Sigmoid colon (tissue), 7 donors: ENCODE measurements at regions of chr12 and their contacts with region 1.

Region 1: DNA sequence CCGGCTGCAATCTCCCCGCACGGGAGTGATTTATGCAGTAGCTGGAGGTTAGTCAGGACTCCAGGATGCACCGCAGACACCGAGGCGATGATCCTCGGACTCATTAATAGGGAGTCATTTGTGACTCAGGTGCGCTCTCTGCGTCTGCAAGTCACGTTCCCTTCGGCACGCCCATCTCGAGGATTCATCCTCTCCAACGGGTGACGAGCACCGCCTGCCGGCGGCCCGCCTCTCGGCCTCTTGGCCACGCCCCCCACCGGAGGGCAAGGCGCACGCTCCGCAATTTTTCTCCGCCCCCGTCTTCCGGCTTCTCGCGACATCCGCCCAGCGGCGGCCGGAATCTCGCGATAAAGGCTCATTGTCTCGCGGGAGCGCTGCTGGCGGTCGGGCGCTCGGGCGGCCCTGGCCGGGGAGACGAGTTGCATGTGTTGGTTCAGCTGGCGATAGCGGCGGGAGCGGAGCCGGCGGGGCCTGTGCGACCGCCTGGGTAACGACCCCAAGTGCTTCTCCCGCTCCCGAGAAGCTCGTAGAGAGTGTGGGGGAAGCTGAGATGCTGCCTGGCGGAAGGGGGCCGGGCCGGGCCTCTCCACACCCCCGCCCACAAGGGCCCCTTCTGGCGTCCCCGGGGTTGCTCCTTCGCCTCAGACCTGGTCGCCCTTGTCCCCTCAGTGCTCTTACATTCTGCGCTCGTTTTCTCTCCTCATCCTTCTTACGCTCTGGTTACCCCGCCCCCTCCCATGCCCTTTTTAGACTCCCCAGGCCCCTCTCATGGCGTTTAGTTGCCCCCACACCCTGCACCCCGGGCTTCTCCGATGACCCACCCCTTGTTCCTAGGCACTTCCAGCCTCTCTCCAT is at the start of gene DENR:
- DNase-seq: peak; percentile 99
- H3K4me3 ChIP-seq: peak within 1 kb of the TSS; percentile 79 to 94 (median 86)
- H3K27ac ChIP-seq: peak within 1 kb of the TSS; percentile 79 to 89 (median 83)
- H3K4me1 ChIP-seq: peaks cover 0 to 20% (median 16%) of the 10 kb centered on the region in 4 donors
- H3K27me3 ChIP-seq: no peaks in the 10 kb centered on the region
- CTCF ChIP-seq: peak in 3 of 4 experiments; percentile 35 to 47 (median 46)
- EP300 ChIP-seq: peak in 1 of 4 donors; percentile 78
- POLR2A ChIP-seq: peak; percentile 37 to 82
- total RNA-seq, gene DENR: 28.8 to 44.9 (median 31.0) TPM

Region 2: GRCh38 chr12:122526683-122527477 is 225.8 kb before region 1 on chr12 and contains the starts of genes KNTC1 and RSRC2:
- intact Hi-C with region 1: loop called (anchors 1 kb)
- DNase-seq: peak; percentile 99
- H3K4me3 ChIP-seq: peak within 1 kb of the TSS; percentile 57 to 79 (median 66)
- H3K27ac ChIP-seq: peak within 1 kb of the TSS; percentile 87 to 95 (median 94)
- H3K4me1 ChIP-seq: peaks cover 0 to 49% (median 45%) of the 10 kb centered on the region in 4 donors
- H3K27me3 ChIP-seq: no peaks in the 10 kb centered on the region
- CTCF ChIP-seq: no peak
- EP300 ChIP-seq: peak in 2 of 4 donors; percentile 10 to 34
- POLR2A ChIP-seq: peak; percentile 96 to 97
- total RNA-seq, gene KNTC1: 5.8 to 13.8 (median 9.1) TPM
- total RNA-seq, gene RSRC2: 60.9 to 79.9 (median 68.8) TPM

Region 3: GRCh38 chr12:122642009-122642408 is 110.7 kb before region 1 on chr12:
- intact Hi-C with region 1: loop called (anchors 2 kb)
- DNase-seq: no peak
- H3K4me3 ChIP-seq: no peak overlapping the region
- H3K27ac ChIP-seq: no peak overlapping the region
- H3K4me1 ChIP-seq: no peaks in the 10 kb centered on the region
- H3K27me3 ChIP-seq: no peaks in the 10 kb centered on the region
- CTCF ChIP-seq: no peak
- EP300 ChIP-seq: no peak
- POLR2A ChIP-seq: no peak

Region 4: DNA sequence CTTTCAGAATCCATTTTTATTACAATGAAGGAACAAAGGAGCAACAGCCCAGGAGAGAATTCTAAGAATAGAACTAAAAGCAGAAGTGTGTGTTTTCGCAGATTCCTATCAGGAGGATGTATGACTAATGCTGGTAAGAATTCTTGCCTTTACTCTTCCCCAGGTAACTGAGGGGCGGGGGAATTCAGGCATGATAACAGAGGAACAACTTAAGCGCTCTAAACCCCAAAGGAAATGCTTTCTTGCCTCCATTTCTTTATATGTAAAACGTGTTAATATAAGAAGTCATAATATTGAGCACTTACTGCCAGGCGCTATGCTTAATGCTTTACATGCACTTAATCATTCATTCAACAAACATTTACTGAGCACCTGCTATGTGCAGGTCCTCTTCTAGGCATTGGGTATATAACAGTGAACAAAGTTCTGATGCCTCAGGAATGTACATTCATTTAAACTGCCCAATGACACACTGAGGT is 26.6 kb before region 1 on chr12:
- intact Hi-C with region 1: no loop called
- DNase-seq: no peak
- H3K4me3 ChIP-seq: no peak overlapping the region
- H3K27ac ChIP-seq: no peak overlapping the region
- H3K4me1 ChIP-seq: no peaks in the 10 kb centered on the region
- H3K27me3 ChIP-seq: no peaks in the 10 kb centered on the region
- CTCF ChIP-seq: no peak
- EP300 ChIP-seq: no peak
- POLR2A ChIP-seq: no peak

Region 5: GRCh38 chr12:123633379-123634141 is 880.9 kb after region 1 on chr12 and contains the starts of genes EIF2B1 and GTF2H3:
- intact Hi-C with region 1: loop called (anchors 10 kb)
- DNase-seq: peak; percentile 98
- H3K4me3 ChIP-seq: peak within 1 kb of the TSS; percentile 77 to 91 (median 84)
- H3K27ac ChIP-seq: peak within 1 kb of the TSS; percentile 81 to 92 (median 84)
- H3K4me1 ChIP-seq: peaks cover 0 to 23% (median 14%) of the 10 kb centered on the region in 4 donors
- H3K27me3 ChIP-seq: no peaks in the 10 kb centered on the region
- CTCF ChIP-seq: no peak
- EP300 ChIP-seq: peak in 1 of 4 donors; percentile 43
- POLR2A ChIP-seq: peak; percentile 58 to 59
- total RNA-seq, gene EIF2B1: 102 to 155 (median 109) TPM
- total RNA-seq, gene GTF2H3: 16.4 to 20.8 (median 19.3) TPM